Prostate gland (tissue), 2 donors: ENCODE measurements at regions of chr5 and their contacts with region 1.

Region 1: DNA sequence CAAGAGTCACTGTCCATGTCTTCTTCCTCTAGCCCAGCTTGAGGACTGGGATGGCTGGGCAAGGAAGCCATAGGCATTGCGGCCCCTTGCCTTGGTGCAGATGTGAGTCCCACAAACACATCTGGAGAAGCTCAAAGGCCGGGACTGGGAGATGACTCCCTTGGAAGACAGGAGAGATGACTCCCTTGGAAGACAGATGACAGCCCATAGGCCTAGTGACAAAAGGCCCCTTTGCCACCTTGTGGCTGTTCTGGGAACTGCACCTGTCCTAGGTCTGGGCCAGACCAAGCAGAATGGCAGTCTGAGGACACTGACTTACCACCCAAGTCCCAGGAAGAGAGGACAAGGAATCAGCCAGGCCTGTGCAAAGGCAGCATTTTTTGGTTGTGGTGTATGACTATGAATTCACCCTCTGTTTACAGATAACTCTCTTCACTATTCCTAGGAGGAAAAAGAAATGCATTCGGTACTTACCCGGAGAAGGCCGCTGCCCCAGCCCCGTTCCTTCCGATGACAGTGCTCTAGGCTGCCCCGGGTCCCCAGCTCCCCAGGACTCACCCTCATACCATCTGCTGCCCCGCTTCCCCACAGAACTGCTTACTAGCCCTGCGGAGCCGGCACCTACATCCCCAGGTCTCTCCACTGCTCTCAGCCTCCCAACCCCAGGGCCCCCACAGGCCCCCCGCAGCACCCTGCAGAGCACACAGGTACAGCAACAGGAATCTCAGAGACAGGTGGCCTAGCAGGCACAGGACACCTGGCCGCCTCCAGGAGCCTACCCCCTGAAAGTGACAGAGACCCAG is 30.8 kb downstream of the SKP1 start:
- DNase-seq: peak; percentile 74
- H3K4me3 ChIP-seq: no peak overlapping the region
- H3K27ac ChIP-seq: no peak overlapping the region
- H3K4me1 ChIP-seq: peaks cover 7% of the 10 kb centered on the region
- H3K27me3 ChIP-seq: no peaks in the 10 kb centered on the region
- CTCF ChIP-seq: peak; percentile 88 to 93 (median 90)
- POLR2A ChIP-seq: no peak

Region 2: DNA sequence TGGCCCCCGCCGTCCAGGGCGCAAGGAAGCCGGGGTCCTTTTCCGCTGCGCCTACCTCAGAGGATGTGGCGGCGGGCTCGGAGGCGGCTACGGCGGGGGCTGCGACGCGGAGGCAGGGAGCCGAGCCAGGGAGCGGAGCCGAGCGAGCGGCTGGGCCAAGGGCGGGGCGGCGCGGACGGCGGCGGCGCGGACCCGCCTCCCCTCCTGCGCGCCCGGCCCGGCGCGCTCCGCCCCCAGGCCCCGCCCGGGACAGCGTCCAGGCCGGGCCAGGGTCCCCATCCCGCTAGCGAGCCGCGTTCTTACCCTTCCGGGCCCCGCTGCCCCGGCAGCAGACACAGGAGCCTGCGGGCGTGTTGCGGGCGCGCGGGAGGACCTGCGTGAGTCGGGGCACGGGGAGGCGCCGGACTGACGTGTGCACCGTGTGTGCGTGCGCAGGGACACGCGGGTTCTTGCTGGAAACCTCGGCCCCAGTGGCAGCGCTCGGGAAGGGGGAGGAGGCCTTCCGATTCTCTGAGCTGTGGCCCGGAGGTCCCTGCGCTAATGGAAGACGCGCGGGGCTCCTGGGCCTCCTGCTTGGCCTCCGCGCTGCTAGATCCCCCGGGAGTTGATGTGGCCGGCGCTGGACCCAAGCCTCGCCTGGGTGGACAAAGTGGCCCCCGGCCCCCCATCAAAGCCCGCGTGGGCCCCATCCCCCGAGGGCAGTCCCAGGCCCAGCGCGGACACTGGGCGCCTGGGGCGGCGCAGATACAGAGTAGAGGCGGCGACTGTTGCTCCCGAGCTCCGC is 141.2 kb before region 1 on chr5 and contains the start of gene VDAC1:
- intact Hi-C with region 1: no loop called
- DNase-seq: peak; percentile 69
- H3K4me3 ChIP-seq: peak within 1 kb of the TSS; percentile 88 to 91
- H3K27ac ChIP-seq: peak within 1 kb of the TSS; percentile 97 to 98
- H3K4me1 ChIP-seq: peaks cover 17% of the 10 kb centered on the region
- H3K27me3 ChIP-seq: no peaks in the 10 kb centered on the region
- CTCF ChIP-seq: no peak
- POLR2A ChIP-seq: peak; percentile 66
- total RNA-seq, gene VDAC1: 142 to 143 TPM

Region 3: DNA sequence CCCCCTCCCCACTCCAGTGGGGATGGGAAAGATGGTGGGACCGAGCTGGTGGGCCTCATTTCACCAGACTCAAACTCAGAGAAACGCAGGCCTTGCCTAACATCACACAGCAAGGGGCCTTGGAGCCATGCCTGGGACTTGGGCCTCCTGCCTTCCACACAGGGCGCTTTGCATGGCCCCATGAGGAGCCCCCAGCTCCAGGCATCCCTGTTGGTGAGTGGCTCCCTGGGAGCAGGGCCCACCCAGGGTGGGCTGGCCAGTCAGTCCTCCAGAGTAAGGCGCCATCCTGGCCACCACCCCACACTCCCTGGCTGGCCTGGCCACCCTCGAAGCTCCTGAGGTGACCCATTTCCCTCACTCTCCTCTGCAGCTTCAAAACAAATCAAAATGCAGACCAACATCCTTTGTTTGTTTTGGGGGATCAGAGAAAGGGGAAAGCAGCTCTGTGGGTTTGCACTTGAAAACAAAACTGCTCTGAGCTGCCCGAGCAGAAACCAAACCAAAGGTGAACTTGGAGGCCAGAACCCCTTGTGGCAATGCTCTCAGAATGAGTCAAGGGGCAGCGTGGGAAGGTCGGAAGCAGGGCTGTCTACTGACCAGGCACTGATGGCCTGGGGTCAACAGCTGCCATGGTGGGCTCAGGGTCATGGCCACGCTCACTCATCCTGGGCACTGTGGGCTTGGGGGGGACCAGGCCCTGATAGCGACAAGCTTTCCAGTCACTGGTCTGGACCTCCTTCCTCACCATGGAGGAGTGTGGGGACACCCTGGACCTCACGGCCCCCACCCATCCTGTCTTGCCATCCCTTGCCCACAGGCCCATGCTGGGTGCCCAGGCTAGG is 104.2 kb before region 1 on chr5:
- intact Hi-C with region 1: loop called (anchors 2 kb)
- DNase-seq: no peak
- H3K4me3 ChIP-seq: no peak overlapping the region
- H3K27ac ChIP-seq: no peak overlapping the region
- H3K4me1 ChIP-seq: no peaks in the 10 kb centered on the region
- H3K27me3 ChIP-seq: no peaks in the 10 kb centered on the region
- CTCF ChIP-seq: no peak
- POLR2A ChIP-seq: no peak

Region 4: DNA sequence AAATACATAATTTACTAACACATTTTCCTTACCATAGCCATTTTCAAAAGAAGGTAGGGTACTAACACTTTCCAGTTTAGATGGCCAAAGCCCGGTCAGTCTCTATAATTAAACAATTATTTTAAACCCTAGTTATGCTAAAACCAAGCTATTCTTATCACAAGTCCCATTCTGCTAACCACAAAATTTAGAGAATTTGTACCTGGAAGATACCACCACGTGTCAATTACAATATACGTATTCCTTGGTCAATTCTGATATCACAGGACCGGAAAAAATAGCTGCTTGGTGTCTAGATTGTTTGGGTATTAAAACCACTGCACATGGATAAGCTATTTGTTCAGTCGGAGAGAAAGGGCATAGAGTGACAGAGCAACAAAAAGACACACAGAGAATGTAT is 49.7 kb after region 1 on chr5:
- intact Hi-C with region 1: no loop called
- DNase-seq: no peak
- H3K4me3 ChIP-seq: no peak overlapping the region
- H3K27ac ChIP-seq: no peak overlapping the region
- H3K4me1 ChIP-seq: no peaks in the 10 kb centered on the region
- H3K27me3 ChIP-seq: no peaks in the 10 kb centered on the region
- CTCF ChIP-seq: no peak
- POLR2A ChIP-seq: no peak